T-cell (primary cell): ENCODE measurements at regions of chr12 and their contacts with region 1.

Region 1: GRCh38 chr12:70640901-70641300 is 3.7 kb upstream of the PTPRB start:
- DNase-seq: no peak
- ATAC-seq: no peak
- H3K4me3 ChIP-seq: no peak overlapping the region
- H3K4me3 Mint-ChIP-seq: no peak overlapping the region
- H3K27ac ChIP-seq: no peak overlapping the region
- H3K27ac Mint-ChIP-seq: no peak overlapping the region
- H3K4me1 ChIP-seq: no peaks in the 10 kb centered on the region
- H3K4me1 Mint-ChIP-seq: peaks cover 0 to 2% (median under 1%) of the 10 kb centered on the region in 3 donors
- H3K27me3 ChIP-seq: no peaks in the 10 kb centered on the region
- H3K27me3 Mint-ChIP-seq: peaks cover 10% of the 10 kb centered on the region in 2 donors

Region 2: DNA sequence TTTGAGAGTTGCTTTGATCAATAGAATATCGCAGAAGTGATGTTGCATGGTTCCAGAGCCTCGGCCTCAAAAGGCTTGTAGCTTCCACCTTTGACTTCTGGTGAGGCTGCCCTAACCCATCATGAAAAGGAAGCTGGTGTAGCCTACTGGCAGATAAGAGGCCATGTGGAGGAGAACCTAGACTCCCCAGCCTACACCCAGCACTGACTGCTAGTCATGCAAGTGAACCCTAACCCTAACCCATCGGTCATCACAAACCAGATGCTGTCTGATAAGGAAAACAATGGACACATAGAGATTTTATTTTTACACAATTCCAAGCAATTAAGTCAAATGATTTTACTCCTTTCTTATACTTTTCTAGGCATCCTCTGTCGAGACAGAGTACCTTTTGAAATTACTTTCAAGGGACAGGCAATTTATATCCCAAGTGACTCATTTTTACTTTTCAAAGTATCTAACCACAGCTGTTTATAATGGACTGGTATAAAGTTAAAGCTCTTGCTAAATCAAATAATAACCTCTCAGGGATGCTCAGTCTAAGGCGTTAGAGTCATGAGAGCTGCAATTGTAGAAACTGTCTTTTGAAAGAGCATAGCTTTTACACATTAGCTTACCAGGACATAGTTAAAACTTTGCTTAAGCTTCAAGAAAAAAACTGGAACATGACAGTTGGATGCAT is 21.3 kb before region 1 on chr12:
- CTCF ChIA-PET with region 1: no interaction called
- POLR2A ChIA-PET with region 1: no interaction called
- DNase-seq: no peak
- ATAC-seq: no peak
- H3K4me3 ChIP-seq: no peak overlapping the region
- H3K4me3 Mint-ChIP-seq: no peak overlapping the region
- H3K27ac ChIP-seq: no peak overlapping the region
- H3K27ac Mint-ChIP-seq: no peak overlapping the region
- H3K4me1 ChIP-seq: no peaks in the 10 kb centered on the region
- H3K4me1 Mint-ChIP-seq: no peaks in the 10 kb centered on the region
- H3K27me3 ChIP-seq: peaks cover 0 to 2% of the 10 kb centered on the region in 2 experiments
- H3K27me3 Mint-ChIP-seq: peaks cover 5 to 16% of the 10 kb centered on the region in 2 donors

Region 3: GRCh38 chr12:70733385-70733784 is 92.5 kb after region 1 on chr12:
- CTCF ChIA-PET with region 1: interaction called in 1 of 2 experiments, 13 read pairs
- POLR2A ChIA-PET with region 1: no interaction called
- DNase-seq: peak in 1 of 35 experiments; percentile 41
- ATAC-seq: peak in 1 of 4 experiments; percentile 58
- H3K4me3 ChIP-seq: no peak overlapping the region
- H3K4me3 Mint-ChIP-seq: no peak overlapping the region
- H3K27ac ChIP-seq: no peak overlapping the region
- H3K27ac Mint-ChIP-seq: no peak overlapping the region
- H3K4me1 ChIP-seq: no peaks in the 10 kb centered on the region
- H3K4me1 Mint-ChIP-seq: no peaks in the 10 kb centered on the region
- H3K27me3 ChIP-seq: no peaks in the 10 kb centered on the region
- H3K27me3 Mint-ChIP-seq: peaks cover 5 to 10% of the 10 kb centered on the region in 2 donors